ENCODE measurements at regions of chr7 and their contacts with region 1.

Region 1: GRCh38 chr7:131071786-131072504 is 255.7 kb upstream of the MKLN1 start:
- DNase-seq: no peak
- H3K4me3 ChIP-seq: no peak overlapping the region
- H3K27ac ChIP-seq: no peak overlapping the region
- H3K27me3 ChIP-seq: no peaks in the 10 kb centered on the region
- CTCF ChIP-seq: peak; percentile 46

Region 2: DNA sequence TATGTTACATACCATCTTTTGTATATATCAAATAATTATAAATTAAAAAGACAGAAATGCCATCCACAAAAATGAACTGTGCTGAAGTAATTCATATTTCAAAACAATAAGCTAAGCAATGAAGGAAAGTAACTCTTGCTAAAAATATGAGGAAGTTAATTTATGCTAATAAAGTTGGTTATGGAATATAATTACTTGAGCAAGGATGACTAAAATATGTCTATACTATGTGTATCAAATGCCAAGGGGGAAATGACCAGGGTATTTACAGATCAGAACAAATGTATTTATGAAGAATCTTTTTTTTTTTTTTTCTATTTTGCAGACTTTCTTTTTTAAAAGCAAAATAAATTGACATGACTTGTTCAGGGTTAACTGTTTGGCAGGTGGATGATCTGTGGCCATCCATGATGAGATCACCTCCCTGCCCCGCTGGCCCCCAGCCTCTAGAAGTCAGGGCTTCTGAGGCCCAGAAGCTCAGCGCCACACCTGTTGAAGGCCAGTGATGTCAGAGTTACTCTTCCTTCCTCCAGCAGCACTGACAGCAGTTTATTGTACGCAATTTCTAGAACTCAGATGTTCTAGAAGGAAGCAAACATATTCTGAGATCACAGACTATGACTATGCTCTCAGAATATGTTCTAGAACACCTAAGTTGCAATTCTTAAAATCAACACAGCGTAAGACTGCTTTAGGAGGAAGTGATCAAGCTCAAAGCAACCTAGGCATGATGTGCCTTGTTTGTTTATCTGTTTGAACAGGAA is 141.9 kb before region 1 on chr7:
- CTCF ChIA-PET with region 1: no interaction called
- POLR2A ChIA-PET with region 1: interaction called, 13 read pairs
- DNase-seq: no peak
- H3K4me3 ChIP-seq: no peak overlapping the region
- H3K27ac ChIP-seq: no peak overlapping the region
- H3K27me3 ChIP-seq: no peaks in the 10 kb centered on the region
- CTCF ChIP-seq: no peak

Region 3: DNA sequence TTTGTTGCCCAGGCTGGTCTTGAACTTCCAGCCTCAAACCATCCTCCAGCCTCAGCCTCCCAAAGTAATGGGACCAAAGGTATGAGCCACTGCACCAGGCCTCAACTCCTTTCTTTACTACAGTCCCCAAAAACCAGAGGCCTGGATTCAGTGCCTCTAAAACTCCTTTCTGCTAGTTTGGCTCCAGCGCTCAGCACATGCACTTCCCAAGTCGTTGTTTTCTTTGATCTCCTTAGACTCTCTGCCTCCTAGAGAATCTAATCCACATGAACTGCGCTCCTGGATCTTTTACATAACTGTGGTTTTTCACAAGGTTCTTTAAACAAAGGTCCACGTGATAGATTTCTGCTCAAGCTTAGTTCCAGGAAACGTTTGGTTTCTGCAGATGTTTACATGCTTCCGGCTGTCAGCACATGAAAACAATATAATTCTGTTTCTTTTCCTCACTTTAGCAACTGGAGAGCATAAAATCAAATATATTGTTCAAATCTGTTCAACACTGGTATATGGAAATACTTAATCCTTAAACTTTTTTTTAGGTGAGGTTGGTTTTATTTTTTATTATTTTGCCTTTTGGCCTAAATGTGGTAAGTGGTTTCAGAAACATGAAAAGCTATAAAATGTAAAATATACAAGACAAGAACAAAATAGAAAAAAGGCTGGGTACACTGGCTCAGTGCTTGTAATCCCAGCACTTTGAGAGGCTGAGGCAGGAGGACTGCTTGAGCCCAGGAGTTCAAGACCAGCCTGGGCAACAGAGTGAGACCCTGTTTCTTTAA is 14.7 kb before region 1 on chr7:
- CTCF ChIA-PET with region 1: interaction called, 12 read pairs
- POLR2A ChIA-PET with region 1: no interaction called
- DNase-seq: peak; percentile 81
- H3K4me3 ChIP-seq: no peak overlapping the region
- H3K27ac ChIP-seq: peak overlapping the region; percentile 80
- H3K27me3 ChIP-seq: no peaks in the 10 kb centered on the region
- CTCF ChIP-seq: no peak

Region 4: DNA sequence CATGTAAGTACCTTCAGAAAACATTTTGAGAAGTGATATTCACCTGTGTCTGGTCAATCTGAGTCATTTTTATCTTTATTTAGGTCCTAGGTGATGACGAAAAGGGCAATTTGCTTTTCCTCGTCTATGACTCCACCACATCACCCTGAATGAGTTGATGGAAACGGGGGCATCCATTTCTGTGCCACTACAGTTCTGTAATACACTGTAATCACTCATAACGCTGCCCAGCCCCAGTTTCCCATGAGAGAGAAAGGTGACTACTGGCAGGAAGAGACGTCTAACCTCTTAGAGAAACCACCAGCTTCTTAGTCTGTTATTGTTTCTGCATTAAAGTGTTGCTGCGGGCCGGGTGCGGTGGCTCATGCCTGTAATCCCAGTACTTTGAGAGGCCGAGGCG is 50.4 kb after region 1 on chr7:
- CTCF ChIA-PET with region 1: no interaction called
- POLR2A ChIA-PET with region 1: no interaction called
- DNase-seq: no peak
- H3K4me3 ChIP-seq: no peak overlapping the region
- H3K27ac ChIP-seq: no peak overlapping the region
- H3K27me3 ChIP-seq: peaks cover 2% of the 10 kb centered on the region
- CTCF ChIP-seq: no peak

Region 5: GRCh38 chr7:131431756-131432155 is 359.8 kb after region 1 on chr7:
- CTCF ChIA-PET with region 1: interaction called, 11 read pairs
- POLR2A ChIA-PET with region 1: no interaction called
- DNase-seq: no peak
- H3K4me3 ChIP-seq: no peak overlapping the region
- H3K27ac ChIP-seq: no peak overlapping the region
- H3K27me3 ChIP-seq: no peaks in the 10 kb centered on the region
- CTCF ChIP-seq: no peak